Endothelial cell of umbilical vein (primary cell): ENCODE measurements at regions of chr6 and their contacts with region 1.

Region 1: DNA sequence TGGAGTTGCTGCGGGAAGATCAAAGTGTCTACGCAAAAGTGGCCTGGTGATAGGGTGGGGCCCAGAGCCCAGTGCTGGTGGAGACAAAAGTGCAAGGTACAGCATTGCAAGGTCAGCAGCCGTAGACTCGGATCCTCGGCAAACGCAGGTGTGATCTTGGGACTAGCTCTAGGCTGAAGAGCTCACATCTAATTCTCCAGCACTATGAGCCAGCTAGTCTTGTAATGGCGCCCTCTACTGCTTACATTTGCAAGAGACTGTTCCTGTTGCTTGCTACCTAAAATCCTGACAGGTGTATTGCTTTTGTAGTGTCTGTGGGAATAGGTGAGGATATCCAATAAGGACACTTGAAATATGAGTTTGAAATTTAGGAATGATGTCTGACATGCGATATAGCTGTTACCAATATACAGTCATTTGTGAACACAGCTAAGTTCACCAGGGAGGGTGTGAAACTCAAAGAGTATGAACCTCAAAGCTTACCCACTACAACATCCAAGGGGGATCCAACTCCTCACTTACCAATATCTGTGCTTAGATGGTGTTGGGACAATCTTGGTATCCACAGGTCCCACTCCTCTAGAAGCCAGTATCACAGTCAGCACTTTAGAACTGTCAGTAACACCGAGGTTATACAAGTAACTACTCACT is 58.4 kb downstream of the PDE7B start:
- DNase-seq: peak; percentile 52
- H3K4me3 ChIP-seq: no peak overlapping the region
- H3K27ac ChIP-seq: no peak overlapping the region
- H3K4me1 ChIP-seq: no peaks in the 10 kb centered on the region
- H3K27me3 ChIP-seq: no peaks in the 10 kb centered on the region
- CTCF ChIP-seq: peak; percentile 50 to 54
- POLR2A ChIP-seq: no peak

Region 2: GRCh38 chr6:135451693-135452092 is 458.2 kb before region 1 on chr6:
- CTCF ChIA-PET with region 1: no interaction called
- POLR2A ChIA-PET with region 1: no interaction called
- dilution Hi-C with region 1: no loop called
- intact Hi-C with region 1: loop called (anchors 10 kb)
- DNase-seq: peak; percentile 63
- H3K4me3 ChIP-seq: no peak overlapping the region
- H3K27ac ChIP-seq: no peak overlapping the region
- H3K4me1 ChIP-seq: no peaks in the 10 kb centered on the region
- H3K27me3 ChIP-seq: no peaks in the 10 kb centered on the region
- CTCF ChIP-seq: peak; percentile 35 to 42
- POLR2A ChIP-seq: no peak

Region 3: DNA sequence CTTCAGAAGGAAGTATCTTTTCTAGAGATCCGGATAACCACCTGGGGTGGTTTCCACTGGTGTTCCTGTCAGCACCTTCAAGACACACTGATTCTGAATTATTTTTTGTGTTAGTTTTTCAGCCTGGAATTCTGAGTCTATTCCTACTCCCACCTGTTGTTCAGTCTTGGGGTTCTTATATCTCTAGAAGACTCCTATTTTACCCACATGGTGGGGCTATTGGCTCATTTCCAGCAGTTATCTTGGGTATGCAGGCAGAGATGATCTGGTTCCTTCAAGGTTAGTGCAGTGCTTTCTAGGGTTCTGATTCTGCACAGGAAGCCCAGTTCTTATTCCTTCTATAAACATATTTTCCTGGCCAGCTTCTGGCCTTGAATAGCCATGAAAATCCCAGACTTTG is 234.0 kb before region 1 on chr6:
- CTCF ChIA-PET with region 1: interaction called, 8 read pairs
- POLR2A ChIA-PET with region 1: no interaction called
- dilution Hi-C with region 1: no loop called
- intact Hi-C with region 1: loop called (anchors 1 kb)
- DNase-seq: peak; percentile 63
- H3K4me3 ChIP-seq: no peak overlapping the region
- H3K27ac ChIP-seq: no peak overlapping the region
- H3K4me1 ChIP-seq: no peaks in the 10 kb centered on the region
- H3K27me3 ChIP-seq: no peaks in the 10 kb centered on the region
- CTCF ChIP-seq: peak in 1 of 2 donors; percentile 8
- POLR2A ChIP-seq: no peak

Region 4: DNA sequence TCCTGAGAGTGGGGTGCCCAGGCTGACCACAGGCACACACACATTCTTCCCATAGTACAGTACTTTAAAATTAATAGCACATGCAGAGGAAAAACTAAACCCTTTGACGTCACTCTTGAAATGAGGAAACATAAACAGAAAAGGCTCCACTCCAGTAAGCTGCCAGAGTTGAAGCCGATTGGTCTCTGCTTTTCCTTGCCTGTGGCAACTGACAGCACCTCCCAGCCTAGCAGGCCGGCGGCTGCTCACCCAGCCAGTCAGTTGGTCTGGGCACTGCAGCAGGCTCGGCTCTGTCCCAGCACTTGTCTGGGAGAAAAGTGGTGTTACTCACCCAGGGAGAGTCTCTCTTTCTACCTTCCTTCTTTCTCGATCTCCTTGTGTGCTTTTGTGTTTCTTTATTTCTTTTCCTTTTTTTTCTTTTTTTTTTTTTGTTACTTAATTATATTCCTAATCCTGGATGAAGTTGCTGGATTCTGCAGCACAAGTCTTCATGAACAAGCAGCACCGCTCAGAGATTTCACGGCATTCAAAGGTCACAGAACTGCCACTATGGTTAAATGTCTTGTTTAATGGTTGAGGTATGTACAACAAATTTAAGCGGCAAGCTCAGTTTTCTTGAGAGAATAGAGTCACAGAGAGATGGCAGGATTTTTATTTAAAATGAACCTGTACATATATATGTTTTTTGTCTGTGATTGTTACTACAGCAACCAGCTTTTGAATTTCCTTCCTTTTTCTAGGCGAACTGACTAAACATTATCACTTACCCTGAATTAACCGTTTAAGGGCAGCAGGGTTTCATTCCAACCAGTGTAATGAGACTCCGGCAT is 58.2 kb before region 1 on chr6 and contains the start of gene PDE7B:
- CTCF ChIA-PET with region 1: interaction called, 14 read pairs
- POLR2A ChIA-PET with region 1: no interaction called
- dilution Hi-C with region 1: no loop called
- intact Hi-C with region 1: no loop called
- DNase-seq: peak; percentile 89
- H3K4me3 ChIP-seq: peak within 1 kb of the TSS; percentile 10 to 58 (median 14)
- H3K27ac ChIP-seq: peak within 1 kb of the TSS; percentile 2
- H3K4me1 ChIP-seq: peaks cover 17% of the 10 kb centered on the region
- H3K27me3 ChIP-seq: peaks cover 0 to 8% of the 10 kb centered on the region in 2 experiments
- CTCF ChIP-seq: no peak
- POLR2A ChIP-seq: no peak
- total RNA-seq, gene PDE7B: 21.3 and 25.1 TPM in 2 replicates

Region 5: GRCh38 chr6:135922174-135922573 is 12.3 kb after region 1 on chr6:
- CTCF ChIA-PET with region 1: interaction called, 10 read pairs
- POLR2A ChIA-PET with region 1: no interaction called
- dilution Hi-C with region 1: no loop called
- intact Hi-C with region 1: no loop called
- DNase-seq: peak; percentile 90
- H3K4me3 ChIP-seq: no peak overlapping the region
- H3K27ac ChIP-seq: peak overlapping the region; percentile 76
- H3K4me1 ChIP-seq: peaks cover 19% of the 10 kb centered on the region
- H3K27me3 ChIP-seq: no peaks in the 10 kb centered on the region
- CTCF ChIP-seq: no peak
- POLR2A ChIP-seq: no peak

Region 6: DNA sequence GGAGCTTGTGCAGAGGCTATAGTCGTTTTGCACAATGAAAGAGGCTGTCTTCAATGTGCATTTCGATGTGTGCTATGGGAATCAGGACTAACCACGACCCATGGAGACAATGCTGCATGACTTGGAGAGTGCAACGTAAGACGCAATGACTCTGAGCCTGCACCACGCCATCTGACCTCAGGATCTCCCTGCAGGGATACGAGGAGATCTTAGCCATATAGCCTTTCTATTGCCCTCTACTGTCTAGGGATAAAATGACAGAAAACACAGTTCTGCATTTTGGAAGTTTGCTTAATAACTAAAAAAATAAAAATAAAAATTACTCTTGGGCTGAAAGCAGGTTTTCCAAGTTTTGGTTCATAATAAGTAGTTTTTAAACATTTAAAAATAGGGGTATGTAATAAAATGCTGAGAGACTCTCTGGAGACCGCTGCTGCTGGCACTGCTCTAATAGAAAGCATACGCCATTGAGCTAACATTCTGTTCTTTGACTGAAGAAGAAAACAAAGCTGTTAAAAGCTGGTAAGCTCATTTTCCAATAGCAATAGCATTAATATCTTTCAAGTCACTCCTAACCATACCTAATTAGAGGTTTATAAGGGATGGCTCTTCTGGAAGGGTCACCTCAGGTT is 28.8 kb after region 1 on chr6:
- CTCF ChIA-PET with region 1: interaction called, 10 read pairs
- POLR2A ChIA-PET with region 1: no interaction called
- dilution Hi-C with region 1: no loop called
- intact Hi-C with region 1: no loop called
- DNase-seq: peak; percentile 14
- H3K4me3 ChIP-seq: no peak overlapping the region
- H3K27ac ChIP-seq: no peak overlapping the region
- H3K4me1 ChIP-seq: no peaks in the 10 kb centered on the region
- H3K27me3 ChIP-seq: no peaks in the 10 kb centered on the region
- CTCF ChIP-seq: peak; percentile 10 to 14
- POLR2A ChIP-seq: no peak

Region 7: DNA sequence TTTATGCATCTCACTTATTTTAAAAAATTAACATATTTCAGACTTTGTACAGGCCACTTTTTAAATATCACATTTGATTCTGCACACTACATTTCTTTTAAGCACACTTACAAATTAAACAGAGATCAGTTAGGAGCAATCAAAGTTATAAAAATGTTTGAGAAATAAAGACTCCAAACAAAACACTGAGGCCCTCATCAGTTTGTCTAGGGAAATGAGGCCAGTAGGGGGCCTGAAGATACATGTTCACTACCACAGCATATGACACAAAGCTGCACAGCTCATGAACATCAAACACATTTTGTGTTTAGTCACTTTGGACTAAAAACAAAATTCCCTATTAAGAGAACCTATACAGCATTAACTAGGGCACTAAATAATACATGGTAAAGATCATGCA is 122.1 kb after region 1 on chr6:
- CTCF ChIA-PET with region 1: interaction called, 11 read pairs
- POLR2A ChIA-PET with region 1: no interaction called
- dilution Hi-C with region 1: no loop called
- intact Hi-C with region 1: no loop called
- DNase-seq: peak; percentile 66
- H3K4me3 ChIP-seq: no peak overlapping the region
- H3K27ac ChIP-seq: no peak overlapping the region
- H3K4me1 ChIP-seq: peaks cover 36% of the 10 kb centered on the region
- H3K27me3 ChIP-seq: no peaks in the 10 kb centered on the region
- CTCF ChIP-seq: peak; percentile 55 to 61
- POLR2A ChIP-seq: no peak